A549 (cell line): ENCODE measurements at regions of chr22 and their contacts with region 1.

Region 1: DNA sequence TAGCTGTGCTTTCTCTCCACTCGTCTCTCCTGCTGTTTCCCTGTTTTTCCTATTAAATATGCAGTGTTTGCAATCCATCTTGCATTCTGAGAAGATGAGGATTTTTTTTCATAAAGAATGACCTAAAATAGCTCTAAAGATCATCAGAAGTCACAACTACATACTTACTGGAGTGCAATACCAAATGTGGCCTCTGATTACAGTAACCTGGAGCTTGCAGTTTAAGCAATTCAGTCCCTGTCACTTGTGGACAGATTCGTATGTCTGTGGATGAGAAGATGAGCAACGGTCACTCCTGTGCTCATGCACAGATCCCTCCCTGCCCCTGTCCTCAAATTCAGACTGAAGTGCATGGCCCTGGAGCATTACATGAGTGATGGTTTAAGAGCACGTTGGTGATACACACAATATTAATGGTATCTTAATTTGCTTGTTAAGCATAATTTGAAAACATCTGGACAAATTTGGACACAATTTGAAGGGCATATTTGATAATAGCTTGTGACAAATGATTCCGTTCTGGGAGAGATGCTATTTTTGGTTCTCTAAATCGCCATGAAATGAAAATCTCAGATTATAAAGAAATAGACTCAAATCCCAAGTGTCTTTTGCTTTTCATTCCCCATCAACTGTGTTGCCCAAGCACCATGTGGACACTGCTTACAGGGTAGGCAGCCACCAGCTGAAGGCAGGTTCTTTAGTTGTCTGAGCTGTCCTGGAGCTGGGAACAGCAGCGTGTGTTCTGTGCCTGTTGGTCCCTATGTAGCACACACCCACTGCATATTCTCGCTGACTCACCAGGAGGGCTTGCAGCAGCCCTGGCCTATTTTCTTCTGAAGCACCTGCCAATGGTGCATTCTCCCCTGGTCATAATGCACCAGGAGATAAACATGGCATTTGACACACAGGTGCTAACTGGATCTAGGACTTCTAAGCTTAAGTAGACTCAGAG is 32.6 kb upstream of the PRAME start:
- DNase-seq: peak in 1 of 2 experiments; percentile 4
- ATAC-seq: peak; percentile 58 to 63; a peak in 2 of 6 replicates
- H3K4me3 ChIP-seq: no peak overlapping the region
- H3K27ac ChIP-seq: no peak overlapping the region
- H3K4me1 ChIP-seq: no peaks in the 10 kb centered on the region
- CTCF ChIP-seq: no peak
- EP300 ChIP-seq: no peak
- POLR2A ChIP-seq: no peak
- RAD21 ChIP-seq: no peak

Region 2: GRCh38 chr22:22316589-22316988 is 275.0 kb before region 1 on chr22:
- CTCF ChIA-PET with region 1: no interaction called
- POLR2A ChIA-PET with region 1: no interaction called
- DNase-seq: no peak
- ATAC-seq: no peak
- H3K4me3 ChIP-seq: no peak overlapping the region
- H3K27ac ChIP-seq: no peak overlapping the region
- H3K4me1 ChIP-seq: no peaks in the 10 kb centered on the region
- CTCF ChIP-seq: no peak
- EP300 ChIP-seq: no peak
- POLR2A ChIP-seq: no peak
- RAD21 ChIP-seq: no peak

Region 3: DNA sequence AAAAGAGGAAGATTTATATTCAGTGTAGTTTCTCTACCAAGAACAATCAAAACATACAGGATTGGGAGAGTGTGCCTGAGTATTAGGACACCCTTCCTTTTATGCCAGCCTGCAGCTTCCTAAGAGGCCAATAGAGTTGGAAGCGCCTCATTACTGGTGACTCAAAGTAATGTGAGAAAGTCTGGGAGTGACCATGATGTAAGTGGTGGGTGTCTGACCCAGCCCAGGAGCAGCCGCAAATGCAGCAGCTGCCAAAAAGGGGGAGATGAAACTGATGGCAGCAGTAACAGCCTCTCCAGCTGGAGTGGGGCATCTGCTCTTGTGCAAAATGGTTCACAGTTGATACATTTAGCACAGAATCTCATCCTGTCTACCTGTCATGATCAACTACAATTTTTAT is 145.1 kb before region 1 on chr22:
- CTCF ChIA-PET with region 1: no interaction called
- POLR2A ChIA-PET with region 1: no interaction called
- DNase-seq: no peak
- ATAC-seq: no peak
- H3K4me3 ChIP-seq: no peak overlapping the region
- H3K27ac ChIP-seq: no peak overlapping the region
- H3K4me1 ChIP-seq: no peaks in the 10 kb centered on the region
- CTCF ChIP-seq: no peak
- EP300 ChIP-seq: no peak
- POLR2A ChIP-seq: no peak
- RAD21 ChIP-seq: no peak

Region 4: DNA sequence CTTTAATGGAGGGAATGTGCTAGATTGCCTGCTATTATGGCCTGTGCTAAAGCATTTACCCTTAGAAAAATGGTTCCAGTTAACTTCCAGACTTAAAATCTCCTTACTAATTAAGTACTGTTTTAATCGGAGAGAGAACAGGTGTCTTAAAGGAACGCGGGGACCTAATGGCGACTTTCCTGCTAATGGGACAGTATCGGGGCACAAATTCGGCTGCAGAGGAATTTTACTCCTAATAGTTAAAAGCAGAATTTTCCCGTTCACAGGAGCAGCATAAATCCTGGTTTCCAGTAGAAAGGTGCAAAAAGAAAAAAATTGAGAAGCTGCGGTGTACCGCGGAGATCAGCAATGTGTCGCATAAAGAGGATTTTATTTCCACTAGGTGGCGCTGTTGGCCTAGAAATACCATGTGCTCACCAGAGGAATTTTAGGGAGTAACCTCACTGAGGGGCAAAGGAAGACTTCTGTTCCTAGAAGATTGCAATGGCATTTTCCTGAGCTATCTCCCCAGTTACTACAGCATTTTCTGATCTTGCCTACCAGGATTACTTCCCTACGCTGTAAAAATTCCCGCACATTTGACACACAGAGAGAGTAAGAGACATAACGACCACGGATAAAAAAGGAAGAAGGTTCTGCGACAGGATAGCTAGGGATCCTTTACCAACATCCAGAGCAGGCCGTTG is 127.6 kb before region 1 on chr22:
- CTCF ChIA-PET with region 1: interaction called, 49 read pairs
- POLR2A ChIA-PET with region 1: no interaction called
- DNase-seq: peak; percentile 38 to 52
- ATAC-seq: peak; percentile 73 to 93; a peak in 5 of 6 replicates
- H3K4me3 ChIP-seq: peak overlapping the region; percentile 18; the same call in 1 of the 3 replicates
- H3K27ac ChIP-seq: no peak overlapping the region
- H3K4me1 ChIP-seq: no peaks in the 10 kb centered on the region
- CTCF ChIP-seq: peak; percentile 73
- EP300 ChIP-seq: no peak
- POLR2A ChIP-seq: no peak
- RAD21 ChIP-seq: peak; percentile 85 to 86

Region 5: DNA sequence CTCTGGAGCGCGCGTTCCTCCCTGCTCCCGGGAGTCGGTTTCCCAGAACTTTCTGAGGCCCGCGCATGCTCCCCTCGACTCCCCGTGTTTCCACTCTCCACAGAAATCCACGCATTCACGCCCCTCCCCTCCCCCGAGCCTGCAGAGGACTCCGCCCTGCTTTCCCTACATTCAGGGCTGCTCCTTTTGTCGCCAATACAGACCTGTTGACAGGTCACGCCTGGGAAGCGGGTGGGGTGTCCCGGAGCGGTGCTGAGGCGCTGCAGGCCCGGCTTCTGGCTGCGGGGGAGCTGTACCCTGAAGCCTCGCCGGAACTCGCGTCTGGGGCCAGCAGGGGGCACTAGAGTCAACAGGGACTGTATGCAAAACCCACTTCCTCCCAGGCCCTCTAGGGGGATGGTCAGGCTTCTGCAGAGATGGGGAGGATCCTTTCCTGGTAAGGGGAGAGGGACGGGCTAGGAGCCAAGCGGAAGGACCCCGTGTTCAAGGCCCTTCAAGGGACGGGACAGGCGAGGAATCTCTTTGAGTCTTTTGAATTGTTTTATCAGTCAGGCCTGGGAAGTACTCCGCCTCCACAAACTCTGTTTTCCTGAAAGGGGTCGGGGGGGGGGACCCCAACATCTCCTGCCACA is 32.5 kb before region 1 on chr22 and contains the start of gene PRAME:
- CTCF ChIA-PET with region 1: interaction called, 15 read pairs
- POLR2A ChIA-PET with region 1: no interaction called
- DNase-seq: peak; percentile 71 to 93
- ATAC-seq: peak; percentile 95 to 98
- H3K4me3 ChIP-seq: peak within 1 kb of the TSS; percentile 90
- H3K27ac ChIP-seq: peak within 1 kb of the TSS; percentile 96 to 99
- H3K4me1 ChIP-seq: peaks cover 36% of the 10 kb centered on the region; the same call in 2 of the 3 replicates
- CTCF ChIP-seq: peak; percentile 76
- EP300 ChIP-seq: no peak
- POLR2A ChIP-seq: peak; percentile 15; the same call in 1 of the 2 replicates
- RAD21 ChIP-seq: peak; percentile 44 to 59
- polyA plus RNA-seq, gene PRAME: 173 and 228 TPM in 2 replicates

Region 6: GRCh38 chr22:22565981-22566380 is 25.6 kb before region 1 on chr22:
- CTCF ChIA-PET with region 1: interaction called, 10 read pairs
- POLR2A ChIA-PET with region 1: no interaction called
- DNase-seq: peak in 1 of 2 experiments; percentile 4
- ATAC-seq: no peak
- H3K4me3 ChIP-seq: no peak overlapping the region
- H3K27ac ChIP-seq: no peak overlapping the region
- H3K4me1 ChIP-seq: no peaks in the 10 kb centered on the region
- CTCF ChIP-seq: no peak
- EP300 ChIP-seq: no peak
- POLR2A ChIP-seq: no peak
- RAD21 ChIP-seq: no peak

Region 7: DNA sequence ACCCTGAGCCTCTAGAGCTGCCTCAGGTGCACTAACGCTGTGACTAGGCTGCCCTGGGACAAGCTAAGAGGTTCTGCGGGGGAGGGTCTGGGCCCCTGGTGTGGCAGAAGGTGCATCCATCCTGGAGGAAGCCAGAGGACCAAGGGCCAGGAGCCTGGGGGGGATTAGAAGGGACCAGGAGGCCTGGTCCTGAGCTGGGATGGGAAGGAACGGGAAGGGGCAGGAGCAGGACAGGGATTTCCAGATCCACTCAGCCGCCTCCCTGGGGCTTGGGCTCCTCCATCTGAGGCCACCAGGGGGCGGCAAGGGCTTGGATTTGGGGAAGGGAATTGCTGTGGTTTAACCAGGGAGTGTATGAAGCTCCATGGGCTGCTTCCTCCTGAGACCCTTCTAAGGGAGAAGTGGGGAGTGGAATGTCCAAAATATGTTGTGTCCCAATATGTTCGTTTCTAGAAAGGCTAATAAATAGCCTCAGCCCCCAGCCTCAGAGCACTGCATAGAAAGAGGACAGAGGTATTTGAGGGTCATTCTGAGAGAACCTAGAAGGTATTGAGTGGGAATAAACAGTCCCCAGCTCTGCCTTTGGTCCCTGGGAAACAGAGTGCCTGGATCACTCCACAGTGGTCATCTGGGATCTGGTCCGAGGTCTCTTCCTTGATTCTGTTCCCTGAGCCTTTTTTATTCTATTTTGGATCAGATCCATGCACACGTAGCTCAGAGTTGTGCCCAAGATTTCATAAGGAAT is 15.2 kb before region 1 on chr22:
- CTCF ChIA-PET with region 1: interaction called, 41 read pairs
- POLR2A ChIA-PET with region 1: interaction called, 3 read pairs
- DNase-seq: peak; percentile 48 to 55
- ATAC-seq: peak; percentile 95 to 99
- H3K4me3 ChIP-seq: no peak overlapping the region
- H3K27ac ChIP-seq: no peak overlapping the region
- H3K4me1 ChIP-seq: no peaks in the 10 kb centered on the region
- CTCF ChIP-seq: peak; percentile 55
- EP300 ChIP-seq: no peak
- POLR2A ChIP-seq: no peak
- RAD21 ChIP-seq: peak in 1 of 2 experiments; percentile 56; a peak in 3 of 5 replicates